ENCODE measurements at regions of chr2 and their contacts with region 1.

Region 1: GRCh38 chr2:136131961-136132824 is 14.2 kb upstream of the CXCR4 start:
- DNase-seq: no peak
- ATAC-seq: no peak
- H3K4me3 ChIP-seq: no peak overlapping the region
- H3K27ac ChIP-seq: no peak overlapping the region
- H3K4me1 ChIP-seq: no peaks in the 10 kb centered on the region
- H3K27me3 ChIP-seq: no peaks in the 10 kb centered on the region
- CTCF ChIP-seq: no peak

Region 2: DNA sequence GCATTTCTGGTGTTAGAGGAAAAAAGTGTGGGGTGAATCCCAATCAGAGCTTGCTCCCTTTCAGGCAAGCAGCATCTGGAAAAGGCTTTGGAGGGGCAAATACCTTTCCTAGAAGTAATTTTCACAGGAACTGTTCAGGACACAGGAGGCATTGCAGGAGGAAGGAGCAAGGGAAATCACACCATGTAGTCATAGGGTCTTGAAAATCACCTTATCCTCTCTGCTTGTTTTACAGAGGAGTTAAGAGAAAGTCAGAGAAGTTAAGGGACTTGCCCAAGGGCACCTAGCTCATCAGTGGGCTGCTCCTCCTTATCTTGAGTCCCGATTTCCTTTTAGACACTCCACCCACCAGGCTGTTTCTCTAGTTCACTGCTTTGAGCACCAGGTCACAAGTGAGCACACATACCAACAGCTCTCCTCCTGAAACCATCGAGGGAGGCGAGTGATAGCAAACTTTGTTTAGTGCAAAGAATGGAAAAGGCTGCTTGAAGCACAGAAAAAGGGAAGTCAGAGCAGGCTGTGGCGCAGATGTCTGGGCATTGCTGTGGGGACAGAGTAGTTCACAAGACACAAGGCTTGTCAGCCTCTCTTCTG is 74.9 kb after region 1 on chr2:
- intact Hi-C with region 1: loop called in 1 of 2 experiments (anchors 2 kb)
- DNase-seq: peak in 1 of 2 donors; percentile 49
- ATAC-seq: no peak
- H3K4me3 ChIP-seq: no peak overlapping the region
- H3K27ac ChIP-seq: no peak overlapping the region
- H3K4me1 ChIP-seq: no peaks in the 10 kb centered on the region
- H3K27me3 ChIP-seq: peaks cover 0 to 2% (median 0%) of the 10 kb centered on the region in 3 donors
- CTCF ChIP-seq: no peak

Region 3: GRCh38 chr2:136238286-136239078 is 106.3 kb after region 1 on chr2:
- intact Hi-C with region 1: loop called in 1 of 2 experiments (anchors 5 kb)
- DNase-seq: no peak
- ATAC-seq: peak; percentile 45 to 77 (median 62)
- H3K4me3 ChIP-seq: no peak overlapping the region
- H3K27ac ChIP-seq: peak overlapping the region; percentile 67
- H3K4me1 ChIP-seq: peaks cover 15% of the 10 kb centered on the region
- H3K27me3 ChIP-seq: no peaks in the 10 kb centered on the region
- CTCF ChIP-seq: no peak

Measured in psoas muscle (tissue), 8 donors.